Activated naive CD4-positive, alpha-beta T cell treated with anti-CD3 and anti-CD28 coated beads for 36 hours (primary cell): ENCODE measurements at regions of chr11 and their contacts with region 1.

Region 1: DNA sequence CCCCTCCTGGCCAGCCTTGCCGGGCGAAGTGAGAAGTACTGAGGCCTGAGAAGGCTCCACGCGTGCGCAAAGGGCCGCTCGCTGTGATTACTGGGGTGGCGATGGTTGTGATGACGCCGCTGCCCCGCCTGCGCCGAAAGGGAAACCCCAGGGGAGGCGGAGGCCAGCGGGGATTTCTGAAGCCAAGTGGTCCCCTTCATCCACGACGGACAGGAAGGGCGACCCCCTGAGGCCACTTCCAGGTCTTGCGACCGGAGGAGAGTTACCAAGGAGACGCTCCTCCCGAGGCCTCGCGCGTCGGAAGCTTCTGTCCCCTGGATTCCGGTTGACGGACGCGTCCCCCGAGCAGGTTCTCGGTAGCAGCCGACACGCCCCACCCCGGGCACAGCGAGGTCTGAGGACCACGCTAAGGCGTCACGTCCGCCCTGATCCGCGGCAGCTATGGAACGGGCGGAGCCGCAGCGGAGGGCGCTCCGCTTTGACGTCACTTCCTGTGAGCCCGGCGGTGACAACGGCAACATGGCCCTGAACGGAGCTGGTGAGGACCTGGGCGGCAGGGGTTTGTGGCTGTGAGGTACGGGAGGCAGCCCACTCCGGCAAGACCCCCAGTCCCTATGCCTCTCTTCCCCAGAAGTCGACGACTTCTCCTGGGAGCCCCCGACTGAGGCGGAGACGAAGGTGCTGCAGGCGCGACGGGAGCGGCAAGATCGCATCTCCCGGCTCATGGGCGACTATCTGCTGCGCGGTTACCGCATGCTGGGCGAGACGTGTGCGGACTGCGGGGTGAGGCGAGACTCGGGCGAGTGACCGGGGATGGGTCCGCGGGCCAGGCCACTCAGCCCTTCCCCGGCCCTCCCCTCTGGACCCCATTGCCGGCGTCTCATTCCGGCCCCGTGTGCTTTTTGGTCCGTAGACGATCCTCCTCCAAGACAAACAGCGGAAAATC is at the start of gene ZNRD2:
- DNase-seq: peak; percentile 99
- H3K4me3 Mint-ChIP-seq: peak within 1 kb of the TSS; percentile 87
- H3K27ac Mint-ChIP-seq: peak within 1 kb of the TSS; percentile 97
- H3K4me1 Mint-ChIP-seq: peaks cover 61% of the 10 kb centered on the region
- H3K27me3 Mint-ChIP-seq: no peaks in the 10 kb centered on the region
- total RNA-seq, gene ZNRD2: 41.4 to 42.5 TPM

Region 2: DNA sequence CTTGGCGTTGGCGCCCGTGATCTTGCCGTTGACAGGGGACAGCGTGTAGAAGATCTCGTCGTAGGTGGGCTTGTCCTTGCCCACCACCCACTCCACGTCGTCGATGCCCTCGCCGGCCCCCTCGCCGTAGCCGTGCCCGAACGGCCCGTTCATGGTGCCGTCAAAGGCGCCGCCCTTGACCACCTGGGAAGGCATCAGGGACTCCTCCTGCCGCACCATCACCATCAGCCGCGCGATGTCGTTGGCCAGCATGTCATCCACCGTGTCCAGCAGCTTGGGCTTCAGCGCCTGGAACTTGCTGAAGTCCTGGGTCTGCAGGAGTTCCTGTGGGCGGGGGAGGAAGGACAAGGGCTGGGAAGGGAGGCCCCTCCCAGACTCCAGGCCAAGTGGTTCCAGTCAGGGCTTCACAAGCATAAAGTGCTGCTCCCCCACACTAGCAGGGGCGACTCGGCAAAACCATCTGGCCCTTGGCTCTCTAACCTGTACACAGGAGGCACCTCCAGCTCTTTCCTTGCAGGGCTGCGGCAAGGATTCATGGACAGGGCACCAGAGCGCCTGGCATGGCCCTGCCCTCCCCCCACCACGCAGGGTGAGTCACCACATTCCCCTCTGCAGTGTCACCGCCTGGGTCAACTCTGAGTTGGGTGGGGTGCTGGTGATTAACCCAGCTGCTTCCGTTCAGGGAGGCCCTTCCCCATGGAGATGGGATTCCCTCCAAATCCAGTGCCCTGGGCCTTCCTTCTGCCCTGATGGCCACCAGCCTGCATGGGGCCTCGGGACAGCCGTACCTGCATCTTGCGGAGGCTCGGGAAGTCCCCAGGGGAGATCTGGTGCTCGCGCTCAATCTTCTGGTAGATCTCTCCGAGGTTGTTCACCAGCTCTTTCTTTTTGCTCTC is 715.5 kb before region 1 on chr11:
- CTCF ChIA-PET with region 1: no interaction called
- intact Hi-C with region 1: loop called (anchors 5 kb)
- DNase-seq: peak; percentile 67
- H3K4me3 Mint-ChIP-seq: no peak overlapping the region
- H3K27ac Mint-ChIP-seq: peak overlapping the region; percentile 89
- H3K4me1 Mint-ChIP-seq: peaks cover 94% of the 10 kb centered on the region
- H3K27me3 Mint-ChIP-seq: no peaks in the 10 kb centered on the region

Region 3: GRCh38 chr11:65279741-65280440 is 290.4 kb before region 1 on chr11:
- CTCF ChIA-PET with region 1: no interaction called
- intact Hi-C with region 1: no loop called
- DNase-seq: peak; percentile 73
- H3K4me3 Mint-ChIP-seq: no peak overlapping the region
- H3K27ac Mint-ChIP-seq: peak overlapping the region; percentile 7
- H3K4me1 Mint-ChIP-seq: peaks cover 17% of the 10 kb centered on the region
- H3K27me3 Mint-ChIP-seq: no peaks in the 10 kb centered on the region

Region 4: DNA sequence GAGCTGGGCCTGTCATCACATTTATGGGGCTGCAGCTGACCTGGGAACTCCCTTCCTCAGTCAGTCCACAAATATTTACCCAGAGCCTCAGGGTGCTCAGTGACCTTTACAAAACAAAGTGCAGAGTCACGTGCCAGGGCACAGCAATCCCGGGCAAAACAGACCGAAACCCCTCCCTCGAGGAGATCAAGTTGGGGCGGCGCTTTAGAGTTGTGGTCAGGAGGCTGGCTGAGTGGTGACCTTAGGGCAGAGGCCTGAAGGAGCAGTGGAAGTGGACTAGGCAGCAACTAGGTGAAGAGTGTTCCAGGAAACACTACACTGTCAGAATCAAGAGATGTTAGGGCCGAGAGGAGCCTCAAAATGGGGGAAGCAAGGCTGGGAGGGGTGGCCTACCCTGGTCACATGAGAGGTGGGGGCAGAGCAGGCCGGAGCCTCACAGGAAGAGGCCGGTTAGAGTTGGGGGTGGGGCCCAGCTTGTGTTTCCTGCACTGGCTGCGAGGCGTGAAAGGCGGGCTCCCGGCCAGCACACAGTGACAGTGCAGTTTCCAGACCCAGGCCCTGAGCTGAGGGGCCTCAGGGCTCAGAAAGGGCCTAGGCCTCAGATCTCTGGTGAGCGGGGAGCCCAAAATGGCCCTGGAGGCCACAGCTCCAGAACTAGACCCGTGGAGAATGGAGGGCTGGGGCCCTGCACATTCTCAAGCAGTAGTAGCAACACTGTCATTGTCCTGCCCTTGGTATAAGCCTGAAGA is 151.4 kb before region 1 on chr11:
- CTCF ChIA-PET with region 1: interaction called, 3 read pairs
- intact Hi-C with region 1: loop called (anchors 1 kb)
- DNase-seq: peak; percentile 97
- H3K4me3 Mint-ChIP-seq: peak overlapping the region; percentile 100
- H3K27ac Mint-ChIP-seq: peak overlapping the region; percentile 99
- H3K4me1 Mint-ChIP-seq: peaks cover 40% of the 10 kb centered on the region
- H3K27me3 Mint-ChIP-seq: peaks cover 10% of the 10 kb centered on the region

Region 5: DNA sequence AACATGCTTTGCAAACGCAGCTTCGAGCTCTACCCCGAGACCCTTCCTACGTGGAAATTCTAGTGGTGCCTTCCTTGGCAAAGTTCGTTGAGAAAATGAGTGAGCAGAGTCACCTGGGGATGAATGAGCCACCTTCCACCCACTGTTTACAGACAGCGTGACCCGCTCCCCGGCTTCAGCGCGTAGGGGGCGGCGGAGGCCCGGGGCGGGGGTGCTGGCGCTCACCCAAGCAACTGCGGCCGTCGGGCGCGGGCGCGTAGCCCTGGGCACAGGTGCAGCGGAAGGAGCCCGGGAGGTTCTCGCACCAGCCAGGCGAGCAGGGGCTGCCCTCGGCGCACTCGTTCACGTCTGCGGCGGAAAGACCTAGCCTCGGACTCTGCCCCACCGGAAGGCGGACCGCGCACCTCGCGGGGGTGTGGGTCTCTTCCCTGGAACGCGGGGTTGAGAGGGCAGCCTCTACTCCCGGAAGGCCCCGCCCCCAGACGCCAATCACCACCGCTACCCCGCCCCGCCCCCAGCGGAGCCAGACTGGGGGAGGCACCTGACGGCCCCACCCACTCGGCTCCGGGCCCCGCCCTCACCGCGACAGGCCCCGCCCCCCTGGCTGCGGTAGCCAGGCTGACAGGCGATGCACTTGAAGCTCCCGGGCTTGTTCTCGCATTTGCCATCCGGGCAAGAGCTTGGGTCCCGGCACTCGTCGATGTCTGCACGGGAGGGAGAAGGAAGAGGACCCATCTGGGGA is 23.9 kb before region 1 on chr11:
- CTCF ChIA-PET with region 1: interaction called, 86 read pairs
- intact Hi-C with region 1: loop called (anchors 1 kb)
- DNase-seq: peak; percentile 98
- H3K4me3 Mint-ChIP-seq: peak overlapping the region; percentile 71
- H3K27ac Mint-ChIP-seq: peak overlapping the region; percentile 72
- H3K4me1 Mint-ChIP-seq: peaks cover 36% of the 10 kb centered on the region
- H3K27me3 Mint-ChIP-seq: no peaks in the 10 kb centered on the region

Region 6: DNA sequence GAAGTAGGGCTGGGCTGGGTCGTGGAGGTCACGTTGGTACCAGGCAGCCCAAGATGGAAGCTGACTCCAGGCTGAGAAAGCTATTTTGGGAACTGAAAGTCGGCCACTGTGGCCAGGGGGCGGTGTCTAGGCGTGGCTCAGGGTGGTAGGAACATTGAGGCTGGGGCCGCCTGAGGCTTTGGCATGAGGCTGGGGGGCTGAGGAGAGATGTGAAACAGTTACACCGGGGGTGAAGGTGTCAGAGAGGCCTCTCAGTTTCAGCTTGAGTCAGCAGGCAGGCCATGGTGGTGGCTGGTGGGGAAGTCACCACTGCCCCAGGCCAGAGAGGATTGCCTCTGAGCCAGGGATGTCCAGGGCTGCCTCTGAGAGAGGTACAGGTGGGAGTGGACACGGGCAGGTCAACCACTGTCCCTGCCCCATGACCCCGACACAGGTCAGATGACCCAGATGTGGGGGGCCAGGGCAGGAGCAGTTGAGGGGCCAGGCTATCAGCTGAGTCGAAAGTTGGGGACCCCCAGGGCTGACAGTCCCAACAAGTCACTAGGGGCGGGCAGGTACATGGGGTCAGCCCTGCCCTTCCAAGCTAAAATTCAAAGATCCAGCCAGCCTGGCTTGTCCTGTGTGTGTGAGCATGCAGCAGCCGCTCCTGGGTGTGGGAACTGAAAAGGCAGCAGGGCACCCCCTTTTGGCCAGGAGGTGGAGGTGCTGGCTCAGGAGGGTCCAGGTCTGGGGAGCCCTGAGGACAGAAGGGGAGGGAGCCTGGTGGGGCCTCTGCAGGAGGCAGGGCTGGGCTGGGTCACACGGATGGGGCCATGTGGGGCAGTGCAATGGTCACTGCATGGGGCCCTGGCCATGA is 18.2 kb after region 1 on chr11:
- CTCF ChIA-PET with region 1: interaction called, 46 read pairs
- intact Hi-C with region 1: loop called (anchors 1 kb)
- DNase-seq: peak; percentile 86
- H3K4me3 Mint-ChIP-seq: no peak overlapping the region
- H3K27ac Mint-ChIP-seq: peak overlapping the region; percentile 90
- H3K4me1 Mint-ChIP-seq: peaks cover 29% of the 10 kb centered on the region
- H3K27me3 Mint-ChIP-seq: no peaks in the 10 kb centered on the region

Region 7: DNA sequence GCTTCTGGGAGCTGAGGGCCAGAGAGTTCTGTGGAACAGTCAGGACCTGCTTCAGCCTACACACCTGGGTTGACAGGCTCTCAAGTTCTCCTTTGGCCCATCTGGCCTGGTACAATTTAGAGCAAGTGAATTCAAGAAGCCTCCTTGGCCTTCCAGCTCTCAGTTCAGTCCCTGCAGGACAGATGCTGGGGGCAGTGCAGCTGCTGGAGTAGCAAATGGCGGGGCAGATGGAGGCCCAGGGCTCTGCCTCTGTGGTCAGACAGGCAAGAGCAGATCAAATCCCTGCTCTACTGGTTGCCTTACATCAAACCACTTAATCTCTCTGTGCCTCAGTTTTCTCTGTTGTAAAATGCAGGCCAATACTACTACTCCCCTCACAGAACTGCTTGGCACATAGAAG is 34.0 kb after region 1 on chr11:
- CTCF ChIA-PET with region 1: no interaction called
- intact Hi-C with region 1: no loop called
- DNase-seq: no peak
- H3K4me3 Mint-ChIP-seq: no peak overlapping the region
- H3K27ac Mint-ChIP-seq: no peak overlapping the region
- H3K4me1 Mint-ChIP-seq: no peaks in the 10 kb centered on the region
- H3K27me3 Mint-ChIP-seq: no peaks in the 10 kb centered on the region

Region 8: DNA sequence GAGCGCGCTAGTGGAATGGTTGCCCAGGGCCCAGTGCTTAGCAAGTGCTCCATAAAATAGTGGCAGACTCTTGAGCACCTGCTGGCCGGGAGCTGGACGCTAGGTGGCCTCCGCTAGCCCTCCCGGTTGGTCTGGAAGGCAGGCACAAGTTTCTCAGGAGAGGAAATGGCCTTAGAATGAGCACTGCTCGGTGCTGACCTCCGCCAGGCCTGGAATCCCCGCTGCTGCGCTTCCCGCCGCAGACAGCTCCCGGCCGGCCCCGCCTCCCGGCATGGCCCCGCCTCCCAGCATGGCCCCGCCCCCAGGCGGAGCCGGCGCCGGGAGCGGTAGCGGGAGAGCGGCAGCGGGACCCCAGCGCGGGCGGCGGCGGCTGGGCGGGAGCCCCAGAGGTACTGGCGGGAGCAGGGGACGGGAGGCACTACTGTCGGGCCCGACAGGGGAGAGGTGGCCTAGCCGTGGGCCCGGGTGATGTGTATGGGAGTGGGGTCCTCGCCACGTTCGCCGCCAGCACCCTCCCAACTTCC is 67.6 kb after region 1 on chr11 and contains the start of gene SIPA1:
- CTCF ChIA-PET with region 1: interaction called, 3 read pairs
- intact Hi-C with region 1: loop called (anchors 1 kb)
- DNase-seq: peak; percentile 71
- H3K4me3 Mint-ChIP-seq: peak within 1 kb of the TSS; percentile 88
- H3K27ac Mint-ChIP-seq: peak within 1 kb of the TSS; percentile 91
- H3K4me1 Mint-ChIP-seq: peaks cover 44% of the 10 kb centered on the region
- H3K27me3 Mint-ChIP-seq: no peaks in the 10 kb centered on the region
- total RNA-seq, gene SIPA1: 146 to 150 TPM

Region 9: DNA sequence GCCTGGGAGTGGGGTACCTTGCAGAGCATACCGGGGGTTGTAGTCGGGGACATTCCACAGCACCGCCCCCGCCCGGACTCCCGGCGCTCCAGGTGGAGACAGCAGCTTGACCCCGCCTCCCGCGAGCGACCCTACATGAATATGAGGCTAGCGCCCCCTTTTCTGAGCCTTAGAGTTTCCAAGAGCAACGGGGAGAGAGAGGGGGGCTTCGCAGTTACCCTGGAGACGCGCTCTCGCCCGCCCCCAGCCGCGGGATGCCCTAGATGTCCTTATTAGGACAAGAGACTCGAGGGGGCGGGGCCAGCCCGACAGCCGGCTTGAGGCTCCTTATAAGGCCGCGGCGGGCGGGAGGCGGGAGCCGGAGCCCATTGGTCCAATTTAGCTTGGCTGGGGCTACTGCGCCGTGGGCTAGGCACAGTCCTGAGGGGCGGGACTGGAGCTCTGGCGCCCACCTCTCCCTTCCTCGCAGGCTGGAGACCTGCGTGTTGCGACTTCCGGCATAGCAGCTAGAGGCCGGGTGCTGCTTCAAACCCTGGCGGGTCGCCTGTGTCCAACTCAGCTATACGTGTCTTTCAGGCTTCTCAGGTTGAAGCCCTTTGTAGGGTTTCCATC is 289.1 kb after region 1 on chr11:
- CTCF ChIA-PET with region 1: no interaction called
- intact Hi-C with region 1: loop called (anchors 2 kb)
- DNase-seq: peak; percentile 99
- H3K4me3 Mint-ChIP-seq: peak overlapping the region; percentile 97
- H3K27ac Mint-ChIP-seq: peak overlapping the region; percentile 100
- H3K4me1 Mint-ChIP-seq: peaks cover 41% of the 10 kb centered on the region
- H3K27me3 Mint-ChIP-seq: no peaks in the 10 kb centered on the region